Dorsolateral prefrontal cortex (tissue), 120 donors: ENCODE measurements at regions of chr11 and their contacts with region 1.

Region 1: GRCh38 chr11:47847892-47848635 is at the start of gene NUP160:
- DNase-seq: peak; percentile 77 to 93 (median 88)
- H3K4me3 ChIP-seq: peak within 1 kb of the TSS; percentile 59 to 100 (median 93)
- H3K27ac ChIP-seq: peak within 1 kb of the TSS; percentile 76 to 99 (median 94)
- H3K27me3 ChIP-seq: no peaks in the 10 kb centered on the region
- CTCF ChIP-seq: peak in 38 of 56 donors; percentile 9 to 57 (median 30)
- total RNA-seq, gene NUP160: 15.7 to 43.6 (median 27.8) TPM

Region 2: GRCh38 chr11:46210133-46210636 is 1637.9 kb before region 1 on chr11:
- intact Hi-C with region 1: no loop called
- DNase-seq: no peak
- H3K4me3 ChIP-seq: no peak overlapping the region
- H3K27ac ChIP-seq: no peak overlapping the region
- H3K27me3 ChIP-seq: no peaks in the 10 kb centered on the region
- CTCF ChIP-seq: no peak

Region 3: GRCh38 chr11:47642099-47642855 is 205.8 kb before region 1 on chr11 and contains the start of gene MTCH2:
- intact Hi-C with region 1: loop called (anchors 2 to 10 kb)
- DNase-seq: peak; percentile 84 to 95 (median 93)
- H3K4me3 ChIP-seq: peak within 1 kb of the TSS; percentile 35 to 100 (median 92)
- H3K27ac ChIP-seq: peak within 1 kb of the TSS; percentile 78 to 100 (median 97)
- H3K27me3 ChIP-seq: no peaks in the 10 kb centered on the region
- CTCF ChIP-seq: peak; percentile 17 to 87 (median 61)
- total RNA-seq, gene MTCH2: 29.3 to 92.1 (median 64.1) TPM

Region 4: DNA sequence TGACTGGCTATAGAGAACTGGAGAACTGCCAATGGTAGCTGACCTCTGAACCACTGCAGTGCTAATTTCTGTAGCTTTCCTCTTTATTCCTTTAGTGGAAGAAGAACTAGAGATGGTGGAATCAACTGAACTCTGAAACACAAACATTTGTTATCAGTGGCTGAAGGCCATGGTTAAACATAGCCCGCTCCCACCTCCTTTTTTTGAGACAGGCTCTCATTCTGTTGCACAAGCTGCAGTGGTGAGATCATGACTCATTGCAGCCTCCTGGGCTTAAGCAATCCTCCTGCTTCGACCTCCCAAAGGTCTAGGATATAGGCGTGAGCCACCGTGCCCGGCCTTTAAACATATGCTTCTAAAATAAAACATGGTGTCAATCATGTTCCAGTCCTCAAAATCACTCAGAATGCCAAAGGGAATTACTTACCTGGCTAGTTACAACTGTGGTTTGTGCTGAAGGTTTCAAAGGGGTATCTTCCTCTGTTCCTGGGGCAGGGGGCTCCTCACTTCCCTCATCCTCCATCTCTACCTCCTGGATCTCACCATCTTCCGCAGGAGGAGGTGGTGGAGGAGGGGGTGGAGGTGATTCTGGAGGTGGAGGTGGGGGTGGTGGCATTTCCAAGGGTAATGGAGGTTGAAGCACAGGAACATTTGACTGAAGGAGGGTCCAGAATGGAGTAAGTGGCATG is 123.9 kb before region 1 on chr11:
- intact Hi-C with region 1: no loop called
- DNase-seq: no peak
- H3K4me3 ChIP-seq: no peak overlapping the region
- H3K27ac ChIP-seq: peak overlapping the region in 11 of 59 donors; percentile 12 to 69 (median 37)
- H3K27me3 ChIP-seq: no peaks in the 10 kb centered on the region
- CTCF ChIP-seq: no peak

Region 5: DNA sequence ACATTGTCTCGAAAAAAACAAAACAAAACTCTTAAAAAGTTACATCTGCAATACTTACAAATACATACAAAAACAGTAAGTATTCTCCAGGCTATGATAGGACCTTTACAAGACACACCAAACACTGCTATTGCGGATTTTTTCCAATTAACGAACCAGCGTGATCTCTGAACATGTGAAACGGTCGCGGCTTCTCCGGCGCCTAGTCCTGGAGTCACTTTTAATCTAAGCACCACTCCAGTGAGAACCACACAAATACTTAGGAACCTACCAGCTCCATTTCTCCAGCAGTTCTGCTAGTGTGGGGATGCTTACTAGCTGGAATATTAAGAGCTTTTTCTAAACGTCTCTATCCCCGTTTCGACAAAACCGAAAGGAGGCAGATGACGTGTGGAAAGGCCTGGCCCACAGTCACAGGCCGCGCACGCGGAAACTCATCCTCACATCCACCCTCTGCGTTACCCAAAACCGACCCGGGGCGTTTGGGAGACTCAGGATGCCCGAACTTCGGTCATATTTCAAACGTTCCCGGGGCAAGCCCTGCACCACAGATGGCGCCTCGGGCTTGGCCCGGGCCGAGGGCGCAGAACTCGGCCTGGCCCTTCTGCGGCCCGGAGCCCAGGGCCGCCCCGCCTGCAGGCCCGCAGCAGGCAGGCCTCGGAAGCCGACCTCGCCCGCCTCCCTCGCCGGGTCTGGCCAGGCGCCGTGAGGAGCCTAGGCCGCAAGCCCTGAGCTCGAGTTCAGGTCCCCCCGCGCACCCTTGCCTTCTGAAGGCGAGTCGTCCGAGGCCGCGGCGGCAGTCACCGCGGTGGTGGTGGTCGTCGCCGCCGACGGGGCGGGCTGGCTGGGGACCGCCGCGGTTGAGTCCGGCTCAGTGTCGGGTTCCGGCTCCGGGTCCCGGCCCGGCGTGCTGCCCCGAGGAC is 81.5 kb before region 1 on chr11:
- intact Hi-C with region 1: loop called (anchors 5 kb)
- DNase-seq: peak; percentile 34 to 75 (median 56)
- H3K4me3 ChIP-seq: peak overlapping the region; percentile 65 to 99 (median 91)
- H3K27ac ChIP-seq: peak overlapping the region; percentile 80 to 100 (median 99)
- H3K27me3 ChIP-seq: no peaks in the 10 kb centered on the region
- CTCF ChIP-seq: peak in 3 of 56 donors; percentile 2 to 4 (median 3)

Region 6: GRCh38 chr11:47797633-47798032 is 50.4 kb before region 1 on chr11:
- intact Hi-C with region 1: loop called in 1 of 2 experiments (anchors 10 kb)
- DNase-seq: no peak
- H3K4me3 ChIP-seq: no peak overlapping the region
- H3K27ac ChIP-seq: no peak overlapping the region
- H3K27me3 ChIP-seq: no peaks in the 10 kb centered on the region
- CTCF ChIP-seq: no peak

Region 7: DNA sequence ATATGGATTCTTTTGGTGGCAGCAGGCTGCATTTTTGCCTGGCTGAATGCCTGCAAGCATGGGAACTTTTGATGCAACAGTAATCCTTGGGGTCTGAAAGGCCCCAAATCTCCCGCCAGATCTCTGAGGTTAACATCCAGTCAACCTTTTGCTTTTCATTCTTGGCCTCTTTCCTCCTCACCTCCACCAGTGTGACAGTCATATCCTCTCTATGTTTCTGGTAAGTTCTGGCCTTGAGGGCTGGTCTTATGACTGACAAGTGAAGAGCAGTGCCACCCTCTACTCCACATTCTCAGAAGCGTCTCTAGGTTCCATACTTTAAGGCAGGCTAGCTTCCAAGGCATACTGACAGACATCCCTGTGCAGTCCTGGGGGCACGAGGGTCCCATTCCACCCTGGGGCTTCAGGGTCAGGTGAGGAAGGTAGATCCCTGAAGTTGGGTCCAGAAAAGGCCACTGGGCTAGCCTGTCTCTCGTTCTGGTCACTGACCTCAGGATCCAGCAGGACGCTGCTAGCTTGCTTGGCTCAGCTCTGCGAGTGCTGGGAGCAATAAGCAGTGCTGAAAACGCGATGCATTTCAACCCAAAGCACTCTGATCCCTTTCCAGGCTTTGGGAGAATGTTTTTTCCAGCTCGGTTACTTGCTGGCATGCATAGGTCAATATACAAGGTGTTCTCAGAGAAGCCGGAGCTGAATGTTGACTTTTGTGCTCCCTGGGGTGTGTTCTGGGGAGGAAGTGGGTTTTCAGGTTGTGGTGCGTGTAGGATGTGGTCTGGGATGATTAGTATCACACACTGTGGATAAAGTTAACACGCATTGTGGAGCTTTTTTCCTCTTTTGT is 207.4 kb after region 1 on chr11:
- intact Hi-C with region 1: loop called in 1 of 2 experiments (anchors 10 kb)
- DNase-seq: no peak
- H3K4me3 ChIP-seq: peak overlapping the region in 2 of 59 donors; percentile 3 to 5
- H3K27ac ChIP-seq: peak overlapping the region in 48 of 59 donors; percentile 4 to 78 (median 46)
- H3K27me3 ChIP-seq: no peaks in the 10 kb centered on the region
- CTCF ChIP-seq: no peak

Region 8: GRCh38 chr11:48109046-48109666 is 261.1 kb after region 1 on chr11:
- intact Hi-C with region 1: loop called in 1 of 2 experiments (anchors 5 kb)
- DNase-seq: no peak
- H3K4me3 ChIP-seq: peak overlapping the region in 56 of 59 donors; percentile 13 to 69 (median 48)
- H3K27ac ChIP-seq: peak overlapping the region in 58 of 59 donors; percentile 11 to 99 (median 80)
- H3K27me3 ChIP-seq: no peaks in the 10 kb centered on the region
- CTCF ChIP-seq: peak in 53 of 56 donors; percentile 29 to 69 (median 57)